ENCODE measurements at regions of chr15 and their contacts with region 1.

Region 1: DNA sequence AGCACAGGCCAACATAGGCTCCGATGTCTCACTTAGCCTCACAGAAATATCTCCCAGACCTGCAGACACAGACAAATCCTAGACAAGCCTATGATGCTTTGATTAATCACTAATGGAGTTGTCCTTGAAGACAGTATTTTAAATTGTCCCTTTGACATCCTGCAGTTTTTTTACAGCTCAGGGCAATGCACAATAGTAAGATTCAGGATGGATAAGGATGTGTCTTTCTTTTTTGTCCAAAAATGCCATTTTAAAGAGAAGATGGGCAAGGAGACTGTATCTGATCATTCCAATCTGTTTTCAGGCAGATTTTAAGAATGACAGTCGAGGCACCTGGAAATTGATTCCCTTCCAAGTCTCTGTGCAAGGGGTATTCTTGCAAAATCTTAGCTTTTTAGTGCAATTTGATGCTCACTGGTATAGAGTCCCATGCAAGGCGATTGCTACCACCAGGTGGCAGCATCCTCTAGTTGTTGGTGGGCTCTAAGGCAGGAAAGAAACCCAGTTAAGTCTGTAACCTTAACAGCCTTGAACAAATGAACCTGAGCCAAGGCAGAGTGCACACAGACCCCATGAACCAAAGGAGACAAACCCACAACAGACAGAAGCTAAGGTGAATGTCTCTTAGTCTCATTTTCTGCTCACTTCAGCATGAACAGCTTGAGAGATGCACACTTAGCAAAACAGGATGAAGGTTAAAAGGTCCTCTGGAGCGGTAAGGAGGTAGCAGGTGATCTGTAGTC is 51.2 kb upstream of the MINAR1 start:
- DNase-seq: peak; percentile 44 to 89
- H3K4me3 ChIP-seq: no peak overlapping the region
- H3K27ac ChIP-seq: no peak overlapping the region
- H3K4me1 ChIP-seq: no peaks in the 10 kb centered on the region
- H3K27me3 ChIP-seq: no peaks in the 10 kb centered on the region
- CTCF ChIP-seq: peak; percentile 43 to 92 (median 85)
- EP300 ChIP-seq: no peak
- POLR2A ChIP-seq: no peak
- RAD21 ChIP-seq: peak; percentile 92 to 97

Region 2: DNA sequence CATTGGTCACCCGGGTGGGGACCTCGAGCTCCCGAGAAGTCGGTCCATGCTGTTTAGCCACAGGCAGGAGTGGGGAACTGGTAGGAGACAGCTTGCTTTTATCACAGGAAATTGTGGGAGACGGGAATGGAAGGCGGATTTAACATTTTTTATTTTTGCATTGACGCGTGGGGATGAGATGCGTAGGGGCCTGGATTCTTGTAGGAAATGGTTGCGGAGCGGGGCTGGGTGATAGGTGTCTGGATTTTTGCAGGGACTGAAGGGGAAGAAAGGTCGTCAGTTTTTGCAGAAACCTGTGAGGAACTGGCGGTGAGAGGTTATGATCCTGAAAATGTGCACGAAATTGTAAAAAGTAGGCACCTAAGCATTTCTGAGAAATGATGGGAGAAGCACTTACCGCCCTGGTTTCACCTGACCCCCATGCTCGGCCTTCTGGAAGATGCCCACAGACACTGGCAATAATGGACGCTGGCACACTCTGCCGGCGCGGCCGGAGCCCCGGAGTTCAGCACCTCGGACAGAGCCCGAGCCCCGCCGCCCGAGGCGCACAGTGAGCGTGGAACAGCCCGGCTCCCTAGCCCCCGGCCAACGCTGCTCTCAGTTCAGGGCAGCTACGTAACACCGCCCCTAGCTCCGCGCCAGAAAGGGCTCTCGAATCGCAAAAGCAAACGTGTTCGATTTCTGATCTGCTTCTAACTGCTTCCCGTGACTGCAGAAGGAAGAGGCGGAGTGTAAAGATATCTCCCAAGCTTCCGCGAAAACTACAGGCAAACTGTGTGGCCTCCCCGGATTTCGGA is 97.5 kb before region 1 on chr15:
- CTCF ChIA-PET with region 1: no interaction called
- POLR2A ChIA-PET with region 1: no interaction called
- DNase-seq: peak in 1 of 2 experiments; percentile 87
- H3K4me3 ChIP-seq: peak overlapping the region in 3 of 4 experiments; percentile 48 to 63 (median 57); a peak in 7 of 8 replicates
- H3K27ac ChIP-seq: no peak overlapping the region
- H3K4me1 ChIP-seq: peaks cover 0 to 3% (median 0%) of the 10 kb centered on the region in 4 experiments; a peak in 2 of 7 replicates
- H3K27me3 ChIP-seq: peaks cover 18 to 49% (median 36%) of the 10 kb centered on the region in 4 experiments
- CTCF ChIP-seq: no peak
- EP300 ChIP-seq: no peak
- POLR2A ChIP-seq: no peak
- RAD21 ChIP-seq: peak in 1 of 2 experiments; percentile 11; a peak in 1 of 4 replicates

Region 3: GRCh38 chr15:79357566-79357965 is 23.4 kb before region 1 on chr15:
- CTCF ChIA-PET with region 1: interaction called, 23 read pairs
- POLR2A ChIA-PET with region 1: no interaction called
- DNase-seq: no peak
- H3K4me3 ChIP-seq: no peak overlapping the region
- H3K27ac ChIP-seq: no peak overlapping the region
- H3K4me1 ChIP-seq: no peaks in the 10 kb centered on the region
- H3K27me3 ChIP-seq: no peaks in the 10 kb centered on the region
- CTCF ChIP-seq: no peak
- EP300 ChIP-seq: no peak
- POLR2A ChIP-seq: no peak
- RAD21 ChIP-seq: no peak

Region 4: DNA sequence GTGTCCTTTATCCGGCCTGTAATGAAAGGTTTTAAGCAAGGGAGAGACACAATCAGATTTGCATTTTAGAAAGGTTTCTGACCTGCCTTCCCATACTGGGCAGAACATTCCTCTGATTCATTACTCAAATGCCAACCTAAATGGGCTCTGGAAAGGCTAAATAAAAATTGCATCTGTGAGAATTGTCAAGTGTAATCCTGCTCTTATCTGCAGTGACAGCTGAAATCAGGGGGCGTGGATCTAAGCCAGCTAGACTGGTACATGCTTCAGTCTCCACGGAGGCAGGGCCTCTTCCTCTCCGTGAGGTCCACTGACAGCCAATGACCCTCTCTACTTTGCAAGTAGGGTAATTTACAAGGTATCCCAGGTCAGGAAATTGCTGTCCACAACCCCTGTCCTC is 18.7 kb after region 1 on chr15:
- CTCF ChIA-PET with region 1: interaction called, 31 read pairs
- POLR2A ChIA-PET with region 1: no interaction called
- DNase-seq: no peak
- H3K4me3 ChIP-seq: no peak overlapping the region
- H3K27ac ChIP-seq: no peak overlapping the region
- H3K4me1 ChIP-seq: peaks cover 0 to 3% (median 0%) of the 10 kb centered on the region in 4 experiments; a peak in 2 of 7 replicates
- H3K27me3 ChIP-seq: no peaks in the 10 kb centered on the region
- CTCF ChIP-seq: no peak
- EP300 ChIP-seq: no peak
- POLR2A ChIP-seq: no peak
- RAD21 ChIP-seq: no peak

Region 5: GRCh38 chr15:79431636-79432344 is 50.9 kb after region 1 on chr15 and contains the start of gene MINAR1:
- CTCF ChIA-PET with region 1: interaction called, 45 read pairs
- POLR2A ChIA-PET with region 1: no interaction called
- DNase-seq: peak in 1 of 2 experiments; percentile 61
- H3K4me3 ChIP-seq: peak within 1 kb of the TSS; percentile 29 to 68 (median 46)
- H3K27ac ChIP-seq: no peak within 1 kb of the TSS
- H3K4me1 ChIP-seq: peaks cover 0 to 11% (median 6%) of the 10 kb centered on the region in 4 experiments; a peak in 6 of 7 replicates
- H3K27me3 ChIP-seq: peaks cover 34 to 57% (median 49%) of the 10 kb centered on the region in 4 experiments
- CTCF ChIP-seq: peak; percentile 6 to 40 (median 33); a peak in 3 of 4 replicates
- EP300 ChIP-seq: no peak
- POLR2A ChIP-seq: no peak
- RAD21 ChIP-seq: peak; percentile 19 to 48; a peak in 3 of 4 replicates
- total RNA-seq, gene MINAR1: 0.59 and 0.67 TPM in 2 replicates

Region 6: GRCh38 chr15:79549196-79549595 is 168.3 kb after region 1 on chr15:
- CTCF ChIA-PET with region 1: interaction called, 13 read pairs
- POLR2A ChIA-PET with region 1: no interaction called
- DNase-seq: no peak
- H3K4me3 ChIP-seq: no peak overlapping the region; a peak in 1 of 8 replicates
- H3K27ac ChIP-seq: no peak overlapping the region
- H3K4me1 ChIP-seq: no peaks in the 10 kb centered on the region
- H3K27me3 ChIP-seq: no peaks in the 10 kb centered on the region
- CTCF ChIP-seq: no peak
- EP300 ChIP-seq: no peak
- POLR2A ChIP-seq: no peak
- RAD21 ChIP-seq: no peak

Region 7: DNA sequence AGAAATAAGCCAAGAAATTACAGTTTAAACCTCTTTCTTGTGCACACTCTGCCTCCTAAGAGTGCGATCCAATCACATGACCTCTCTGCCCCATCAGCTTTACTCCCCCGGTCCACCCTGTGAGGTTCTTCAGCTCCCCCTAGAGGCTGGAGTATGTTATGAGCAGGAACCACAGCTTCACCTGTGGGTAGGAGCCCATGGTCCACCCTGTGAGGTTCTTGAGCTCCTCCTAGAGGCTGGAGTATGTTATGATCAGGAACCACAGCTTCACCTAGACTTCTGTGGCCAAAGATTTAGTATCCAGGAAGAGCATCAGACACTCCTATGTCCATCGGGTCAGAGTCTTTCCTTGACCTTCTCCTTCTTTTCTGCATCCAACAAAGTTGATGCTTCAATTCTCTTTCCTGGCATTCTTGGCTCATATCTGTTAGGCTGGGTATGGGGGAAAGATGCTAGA is 215.2 kb after region 1 on chr15:
- CTCF ChIA-PET with region 1: interaction called, 105 read pairs
- POLR2A ChIA-PET with region 1: no interaction called
- DNase-seq: peak; percentile 58 to 73
- H3K4me3 ChIP-seq: no peak overlapping the region
- H3K27ac ChIP-seq: no peak overlapping the region
- H3K4me1 ChIP-seq: no peaks in the 10 kb centered on the region
- H3K27me3 ChIP-seq: peaks cover 0 to under 1% (median 0%) of the 10 kb centered on the region in 4 experiments; a peak in 2 of 7 replicates
- CTCF ChIP-seq: peak; percentile 88 to 100 (median 100)
- EP300 ChIP-seq: no peak
- POLR2A ChIP-seq: no peak
- RAD21 ChIP-seq: peak; percentile 99 to 100

Region 8: DNA sequence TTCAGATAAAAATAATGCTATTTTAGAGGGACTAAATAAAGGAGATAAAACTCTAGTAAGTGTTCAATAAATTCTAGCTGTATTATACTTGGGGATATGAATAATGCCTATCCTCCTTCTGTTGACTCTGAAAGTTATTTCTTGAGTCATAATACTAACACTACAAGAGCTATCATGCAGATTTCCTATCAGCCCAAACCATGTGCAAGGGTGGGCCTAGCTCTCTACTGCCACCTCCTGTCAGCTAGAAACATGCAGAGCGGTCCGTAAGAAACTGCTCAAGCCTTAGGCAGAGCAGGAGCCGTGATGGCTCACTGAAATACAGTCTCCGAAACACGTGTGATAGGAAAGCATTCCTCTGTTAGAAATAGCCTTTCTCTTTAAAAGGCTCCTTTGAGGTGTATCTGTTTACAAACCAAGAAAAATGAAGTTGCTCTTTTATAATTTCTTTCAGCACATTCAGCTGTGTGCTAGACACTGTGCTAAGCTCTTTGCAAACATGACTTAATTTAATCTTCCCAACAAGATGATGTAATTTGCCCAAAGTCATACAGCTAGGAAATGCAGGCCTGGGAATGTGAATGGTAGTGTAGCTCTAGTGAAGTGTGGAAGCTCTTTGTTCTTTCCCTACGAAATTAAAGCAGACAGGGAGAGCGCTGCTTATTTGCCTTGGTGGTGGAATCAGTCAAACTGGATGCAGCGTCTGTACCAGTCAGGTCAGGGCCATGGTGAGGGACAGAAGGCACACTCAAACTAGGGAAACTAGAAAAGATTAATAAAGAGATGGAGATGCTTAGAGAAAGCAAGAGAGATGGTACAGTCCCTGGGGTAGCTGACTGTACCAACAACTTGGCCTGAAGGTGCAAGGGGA is 472.8 kb after region 1 on chr15:
- CTCF ChIA-PET with region 1: interaction called, 25 read pairs
- POLR2A ChIA-PET with region 1: no interaction called
- DNase-seq: peak; percentile 54 to 59
- H3K4me3 ChIP-seq: no peak overlapping the region
- H3K27ac ChIP-seq: no peak overlapping the region
- H3K4me1 ChIP-seq: no peaks in the 10 kb centered on the region
- H3K27me3 ChIP-seq: no peaks in the 10 kb centered on the region
- CTCF ChIP-seq: peak; percentile 84 to 98 (median 85)
- EP300 ChIP-seq: no peak
- POLR2A ChIP-seq: no peak
- RAD21 ChIP-seq: peak; percentile 78 to 81

Measured in H1 (cell line).